T-cell (primary cell): ENCODE measurements at regions of chr7 and their contacts with region 1.

Region 1: DNA sequence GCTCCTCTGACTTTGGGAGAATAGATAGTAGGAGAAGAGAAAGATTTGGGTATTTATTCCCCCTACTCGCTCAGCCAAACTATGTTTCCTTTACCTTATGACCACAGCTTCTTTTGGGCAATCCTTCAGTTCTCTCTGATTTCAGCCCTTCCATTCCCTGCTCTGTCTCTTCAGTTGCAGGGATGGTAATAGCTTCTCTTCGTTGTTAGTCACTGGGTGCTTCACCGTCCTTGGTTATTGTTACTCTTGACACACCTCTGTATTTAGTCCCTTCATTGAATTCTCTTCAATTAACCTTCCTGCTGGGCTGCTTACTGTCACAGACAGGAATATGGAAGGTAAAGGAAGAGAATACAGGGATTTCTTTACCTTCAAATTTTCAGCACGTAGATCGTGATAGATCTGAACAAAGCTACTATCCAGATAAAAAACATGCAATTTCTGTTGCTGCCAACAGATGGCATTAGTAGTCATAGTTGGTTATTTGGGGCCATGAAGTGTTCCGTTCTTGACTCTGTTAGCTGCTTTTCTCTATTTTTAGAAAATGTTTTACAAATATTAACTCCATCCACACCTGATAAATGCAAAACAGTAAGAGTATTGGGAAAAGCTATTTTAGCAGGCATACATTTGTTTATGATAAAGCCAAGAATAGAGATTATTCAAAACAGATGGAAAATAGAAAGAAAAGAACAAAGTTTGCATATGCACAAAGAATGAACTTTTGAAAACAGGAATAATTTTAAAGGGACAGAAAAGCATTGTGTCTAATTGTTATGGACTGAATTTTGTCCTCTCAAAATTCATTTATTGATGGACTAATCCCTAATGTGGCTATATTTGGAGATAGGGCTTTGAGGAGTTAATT is 14.0 kb upstream of the PTTG1IP2 start:
- DNase-seq: peak in 4 of 35 experiments; percentile 7 to 57 (median 11)
- ATAC-seq: peak; percentile 53 to 75 (median 58)
- H3K4me3 ChIP-seq: no peak overlapping the region
- H3K4me3 Mint-ChIP-seq: peak overlapping the region in 1 of 3 donors; percentile 5
- H3K27ac ChIP-seq: no peak overlapping the region
- H3K27ac Mint-ChIP-seq: peak overlapping the region in 1 of 2 donors; percentile 58
- H3K4me1 ChIP-seq: no peaks in the 10 kb centered on the region
- H3K4me1 Mint-ChIP-seq: peaks cover 6 to 8% (median 7%) of the 10 kb centered on the region in 3 donors
- H3K27me3 ChIP-seq: peaks cover 2 to 3% of the 10 kb centered on the region in 2 experiments
- H3K27me3 Mint-ChIP-seq: peaks cover 11 to 16% of the 10 kb centered on the region in 2 donors

Region 2: DNA sequence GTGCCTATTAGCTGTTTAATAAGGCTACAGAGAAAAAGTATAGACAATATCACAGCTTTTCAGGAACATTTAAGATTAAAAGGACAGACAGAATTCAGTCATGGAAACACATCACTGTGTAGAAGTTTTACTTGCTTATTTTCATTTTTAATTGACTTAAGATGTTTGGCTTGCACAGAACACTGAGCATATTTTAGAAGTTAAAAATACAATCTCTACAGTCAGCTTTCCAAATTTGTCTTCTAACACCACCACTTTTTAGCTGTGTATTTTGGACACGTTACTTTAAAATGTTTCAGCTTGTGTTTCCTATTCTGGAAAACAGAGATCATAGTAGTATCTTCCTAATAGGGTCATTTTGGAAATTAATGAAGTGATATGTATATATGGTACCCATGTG is 198.6 kb before region 1 on chr7:
- CTCF ChIA-PET with region 1: no interaction called
- POLR2A ChIA-PET with region 1: no interaction called
- DNase-seq: no peak
- ATAC-seq: no peak
- H3K4me3 ChIP-seq: no peak overlapping the region
- H3K4me3 Mint-ChIP-seq: no peak overlapping the region
- H3K27ac ChIP-seq: no peak overlapping the region
- H3K27ac Mint-ChIP-seq: no peak overlapping the region
- H3K4me1 ChIP-seq: no peaks in the 10 kb centered on the region
- H3K4me1 Mint-ChIP-seq: no peaks in the 10 kb centered on the region
- H3K27me3 ChIP-seq: peaks cover 0 to 4% of the 10 kb centered on the region in 2 experiments
- H3K27me3 Mint-ChIP-seq: peaks cover 19% of the 10 kb centered on the region in 2 donors

Region 3: DNA sequence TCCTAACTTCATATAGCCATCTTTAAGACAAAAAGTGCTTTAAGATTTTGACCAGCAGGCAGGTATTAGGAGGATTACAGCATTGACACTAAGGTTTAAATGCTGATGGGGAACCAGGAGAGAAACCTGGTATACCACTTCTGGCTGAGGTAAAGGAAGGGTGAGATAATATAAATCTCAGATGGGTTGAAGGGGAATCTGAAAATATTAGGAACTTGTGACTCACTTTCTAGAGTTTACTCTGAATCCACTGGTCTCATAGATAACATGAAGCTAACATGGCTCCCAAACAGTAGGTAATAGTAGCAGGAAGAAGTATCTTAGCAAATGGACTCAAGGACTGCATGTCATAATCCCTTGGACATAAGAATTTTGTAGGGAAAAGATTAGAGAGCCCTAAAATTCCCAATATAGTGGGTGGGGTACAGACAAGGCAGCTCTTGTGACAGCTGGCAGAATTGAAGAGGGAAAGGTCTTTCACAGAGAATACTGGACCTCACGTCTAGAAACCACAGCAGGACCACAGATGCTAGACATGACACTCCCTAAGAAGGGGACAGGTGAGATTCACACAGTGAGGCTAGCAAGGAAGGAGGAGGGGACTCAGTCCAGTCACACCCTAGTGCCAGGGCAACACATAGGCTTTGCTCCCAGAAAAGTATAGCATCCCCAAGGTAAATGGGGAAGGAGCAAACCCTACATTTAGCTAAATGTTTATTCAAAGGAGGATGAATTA is 17.6 kb after region 1 on chr7:
- CTCF ChIA-PET with region 1: interaction called, 3 to 14 read pairs
- POLR2A ChIA-PET with region 1: interaction called in 1 of 2 experiments, 3 read pairs
- DNase-seq: no peak
- ATAC-seq: no peak
- H3K4me3 ChIP-seq: no peak overlapping the region
- H3K4me3 Mint-ChIP-seq: no peak overlapping the region
- H3K27ac ChIP-seq: no peak overlapping the region
- H3K27ac Mint-ChIP-seq: no peak overlapping the region
- H3K4me1 ChIP-seq: no peaks in the 10 kb centered on the region
- H3K4me1 Mint-ChIP-seq: no peaks in the 10 kb centered on the region
- H3K27me3 ChIP-seq: no peaks in the 10 kb centered on the region
- H3K27me3 Mint-ChIP-seq: peaks cover 15 to 38% of the 10 kb centered on the region in 2 donors